Naive thymus-derived CD4-positive, alpha-beta T cell (primary cell): ENCODE measurements at regions of chr3 and their contacts with region 1.

Region 1: DNA sequence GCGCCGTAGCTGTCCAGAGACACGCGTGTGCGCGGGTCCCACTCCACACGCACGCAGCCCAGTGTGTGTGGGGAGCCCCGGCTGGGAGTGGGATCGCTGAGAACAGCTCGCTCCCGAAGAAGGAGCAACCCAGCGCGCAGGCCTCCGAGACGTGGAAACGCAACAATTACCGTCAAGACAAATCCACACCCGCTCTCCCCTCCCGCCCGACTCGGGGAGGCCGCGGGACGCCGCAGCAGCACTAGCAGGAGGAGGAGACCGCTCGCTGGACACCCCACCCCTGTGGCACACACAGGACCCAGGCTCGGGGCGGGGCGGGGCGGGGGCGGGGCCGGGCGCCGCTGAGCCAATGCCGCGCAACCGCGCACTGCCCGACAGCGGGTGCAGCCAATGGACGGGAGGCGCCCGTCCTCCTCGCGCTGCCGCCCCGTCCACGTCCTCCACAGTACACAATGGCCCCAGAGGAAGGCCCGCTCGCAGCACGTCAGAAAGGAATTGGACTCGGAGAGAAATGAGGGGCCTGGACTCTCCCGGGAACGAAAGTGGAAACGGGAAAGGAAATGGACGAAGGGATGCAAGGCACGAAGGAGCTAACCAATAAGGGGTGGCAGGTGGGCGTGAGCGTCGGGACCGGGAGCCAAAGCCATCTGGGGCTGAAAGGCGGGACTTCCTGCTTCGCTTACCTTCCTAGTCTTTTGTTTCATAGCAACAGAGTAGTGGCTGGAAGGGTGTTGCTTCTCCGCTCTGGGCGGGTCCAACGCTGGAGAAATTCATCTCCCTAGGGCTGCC is at the start of gene CBLB:
- DNase-seq: peak; percentile 72 to 89 (median 85)
- ATAC-seq: peak; percentile 93
- H3K4me3 ChIP-seq: peak within 1 kb of the TSS; percentile 86
- H3K4me3 Mint-ChIP-seq: peak within 1 kb of the TSS; percentile 89 to 100 (median 97)
- H3K27ac ChIP-seq: peak within 1 kb of the TSS; percentile 91
- H3K27ac Mint-ChIP-seq: peak within 1 kb of the TSS; percentile 89 to 98 (median 94)
- H3K4me1 ChIP-seq: peaks cover 31 to 41% of the 10 kb centered on the region in 2 donors
- H3K4me1 Mint-ChIP-seq: peaks cover 23 to 58% (median 49%) of the 10 kb centered on the region in 7 donors
- H3K27me3 ChIP-seq: no peaks in the 10 kb centered on the region
- H3K27me3 Mint-ChIP-seq: no peaks in the 10 kb centered on the region
- total RNA-seq, gene CBLB: 82.8 to 135 (median 109) TPM

Region 2: DNA sequence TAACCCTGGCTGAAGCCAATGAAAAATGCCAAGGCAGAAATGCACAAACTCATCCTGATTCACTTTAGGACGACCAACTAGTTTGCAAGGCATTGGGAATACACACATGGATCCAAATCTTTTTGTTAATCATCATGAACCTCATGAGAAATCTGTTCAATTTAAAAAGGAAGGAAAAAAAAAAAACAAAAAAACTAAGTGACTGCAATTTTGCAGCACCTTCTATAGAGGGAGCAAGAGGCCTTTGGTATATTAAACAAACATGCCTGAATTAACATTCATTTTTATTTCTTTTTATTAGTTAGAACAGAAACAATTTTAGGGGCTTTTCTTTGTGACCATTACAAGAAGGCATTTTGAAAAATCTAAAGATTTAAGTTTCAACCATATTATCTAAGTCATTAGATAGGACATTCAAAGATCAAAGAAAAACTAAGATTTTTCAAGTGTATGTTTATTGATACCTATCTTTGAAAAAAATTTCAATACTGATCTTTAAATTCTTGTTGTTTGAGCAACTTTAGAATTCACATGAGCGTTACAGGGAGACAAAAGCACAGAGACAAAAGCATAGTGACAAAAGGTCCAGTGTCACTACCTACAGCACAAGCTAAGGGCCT is 182.5 kb before region 1 on chr3:
- CTCF ChIA-PET with region 1: no interaction called
- POLR2A ChIA-PET with region 1: no interaction called
- intact Hi-C with region 1: loop called (anchors 1 kb)
- DNase-seq: peak in 6 of 9 donors; percentile 17 to 57 (median 48)
- ATAC-seq: peak; percentile 76
- H3K4me3 ChIP-seq: no peak overlapping the region
- H3K4me3 Mint-ChIP-seq: no peak overlapping the region
- H3K27ac ChIP-seq: no peak overlapping the region
- H3K27ac Mint-ChIP-seq: peak overlapping the region in 8 of 9 donors; percentile 18 to 59 (median 48)
- H3K4me1 ChIP-seq: peaks cover 4 to 5% of the 10 kb centered on the region in 2 donors
- H3K4me1 Mint-ChIP-seq: peaks cover 14 to 37% (median 29%) of the 10 kb centered on the region in 7 donors
- H3K27me3 ChIP-seq: no peaks in the 10 kb centered on the region
- H3K27me3 Mint-ChIP-seq: no peaks in the 10 kb centered on the region

Region 3: GRCh38 chr3:105827959-105828358 is 41.0 kb before region 1 on chr3:
- CTCF ChIA-PET with region 1: no interaction called
- POLR2A ChIA-PET with region 1: no interaction called
- intact Hi-C with region 1: loop called (anchors 1 kb)
- DNase-seq: no peak
- ATAC-seq: no peak
- H3K4me3 ChIP-seq: no peak overlapping the region
- H3K4me3 Mint-ChIP-seq: peak overlapping the region in 4 of 10 donors; percentile 29 to 52 (median 40)
- H3K27ac ChIP-seq: no peak overlapping the region
- H3K27ac Mint-ChIP-seq: peak overlapping the region in 4 of 9 donors; percentile 1 to 90 (median 20)
- H3K4me1 ChIP-seq: peaks cover 37 to 65% of the 10 kb centered on the region in 2 donors
- H3K4me1 Mint-ChIP-seq: peaks cover 57 to 92% (median 88%) of the 10 kb centered on the region in 7 donors
- H3K27me3 ChIP-seq: no peaks in the 10 kb centered on the region
- H3K27me3 Mint-ChIP-seq: no peaks in the 10 kb centered on the region

Region 4: DNA sequence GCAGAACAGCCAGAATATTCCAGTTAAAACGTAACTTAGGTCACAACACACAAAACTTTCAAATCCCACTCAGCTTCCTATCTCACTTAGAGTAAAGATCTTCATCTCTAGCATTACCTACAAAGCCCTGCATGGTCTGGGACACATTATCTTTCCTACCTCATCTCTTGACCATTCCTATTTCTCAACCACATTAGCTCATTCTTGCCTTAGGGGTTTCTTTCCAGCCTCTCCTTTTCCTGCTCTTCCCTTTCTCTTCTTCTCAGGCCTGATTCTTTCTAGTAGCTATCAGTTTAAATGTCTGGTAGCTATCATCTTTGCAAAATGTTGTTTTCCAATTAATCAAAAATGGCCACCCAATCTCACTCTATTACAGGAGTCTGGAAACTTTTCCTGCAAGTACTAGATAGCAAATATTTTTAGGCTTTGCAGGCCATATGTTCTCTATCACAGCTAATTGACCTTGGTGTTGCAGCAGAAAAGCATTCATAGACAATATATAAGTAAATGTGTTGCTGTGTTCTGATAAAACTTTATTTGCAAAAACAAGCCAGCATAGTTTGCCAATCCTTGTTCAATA is 15.0 kb after region 1 on chr3:
- CTCF ChIA-PET with region 1: no interaction called
- POLR2A ChIA-PET with region 1: interaction called, 9 read pairs
- intact Hi-C with region 1: loop called (anchors 1 to 2 kb)
- DNase-seq: no peak
- ATAC-seq: no peak
- H3K4me3 ChIP-seq: no peak overlapping the region
- H3K4me3 Mint-ChIP-seq: peak overlapping the region; percentile 27 to 92 (median 86)
- H3K27ac ChIP-seq: no peak overlapping the region
- H3K27ac Mint-ChIP-seq: peak overlapping the region in 5 of 9 donors; percentile 0 to 49 (median 29)
- H3K4me1 ChIP-seq: no peaks in the 10 kb centered on the region
- H3K4me1 Mint-ChIP-seq: peaks cover 5 to 23% (median 12%) of the 10 kb centered on the region in 7 donors
- H3K27me3 ChIP-seq: no peaks in the 10 kb centered on the region
- H3K27me3 Mint-ChIP-seq: no peaks in the 10 kb centered on the region

Region 5: GRCh38 chr3:105906836-105907235 is 37.9 kb after region 1 on chr3:
- CTCF ChIA-PET with region 1: no interaction called
- POLR2A ChIA-PET with region 1: no interaction called
- intact Hi-C with region 1: no loop called
- DNase-seq: no peak
- ATAC-seq: no peak
- H3K4me3 ChIP-seq: no peak overlapping the region
- H3K4me3 Mint-ChIP-seq: no peak overlapping the region
- H3K27ac ChIP-seq: no peak overlapping the region
- H3K27ac Mint-ChIP-seq: no peak overlapping the region
- H3K4me1 ChIP-seq: peaks cover 0 to 5% of the 10 kb centered on the region in 2 donors
- H3K4me1 Mint-ChIP-seq: peaks cover 5 to 23% (median 13%) of the 10 kb centered on the region in 7 donors
- H3K27me3 ChIP-seq: no peaks in the 10 kb centered on the region
- H3K27me3 Mint-ChIP-seq: no peaks in the 10 kb centered on the region

Region 6: DNA sequence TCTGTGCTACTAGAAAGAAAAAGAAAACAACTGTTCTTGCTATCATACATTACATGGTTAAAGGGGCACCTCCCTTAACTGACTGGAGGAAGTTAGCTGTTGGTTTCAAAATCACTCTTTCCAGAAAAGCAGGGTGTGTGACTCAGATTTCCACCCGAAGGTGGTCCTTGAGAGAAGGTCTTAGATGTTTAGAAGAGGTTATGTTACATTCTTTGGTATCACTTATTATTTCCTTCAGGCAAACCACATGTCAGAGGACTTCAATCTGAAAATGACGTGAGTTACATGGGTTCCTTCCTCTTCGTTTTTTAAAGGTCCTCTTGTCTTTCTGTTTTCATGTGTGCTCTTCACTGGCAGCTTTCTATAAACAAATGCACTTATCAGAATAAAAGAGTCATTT is 307.8 kb after region 1 on chr3:
- CTCF ChIA-PET with region 1: no interaction called
- POLR2A ChIA-PET with region 1: no interaction called
- intact Hi-C with region 1: loop called (anchors 1 kb)
- DNase-seq: peak in 8 of 9 donors; percentile 59 to 86 (median 78)
- ATAC-seq: peak; percentile 94
- H3K4me3 ChIP-seq: peak overlapping the region; percentile 28
- H3K4me3 Mint-ChIP-seq: peak overlapping the region; percentile 1 to 79 (median 73)
- H3K27ac ChIP-seq: peak overlapping the region; percentile 43
- H3K27ac Mint-ChIP-seq: peak overlapping the region; percentile 50 to 91 (median 87)
- H3K4me1 ChIP-seq: peaks cover 28 to 32% of the 10 kb centered on the region in 2 donors
- H3K4me1 Mint-ChIP-seq: peaks cover 33 to 61% (median 56%) of the 10 kb centered on the region in 7 donors
- H3K27me3 ChIP-seq: no peaks in the 10 kb centered on the region
- H3K27me3 Mint-ChIP-seq: no peaks in the 10 kb centered on the region

Region 7: GRCh38 chr3:106333911-106334618 is 465.1 kb after region 1 on chr3:
- CTCF ChIA-PET with region 1: no interaction called
- POLR2A ChIA-PET with region 1: no interaction called
- intact Hi-C with region 1: loop called in 1 of 2 experiments (anchors 5 kb)
- DNase-seq: peak in 1 of 9 donors; percentile 45
- ATAC-seq: peak; percentile 47
- H3K4me3 ChIP-seq: no peak overlapping the region
- H3K4me3 Mint-ChIP-seq: peak overlapping the region in 1 of 10 donors; percentile 73
- H3K27ac ChIP-seq: no peak overlapping the region
- H3K27ac Mint-ChIP-seq: peak overlapping the region in 3 of 9 donors; percentile 47 to 86 (median 62)
- H3K4me1 ChIP-seq: peaks cover 0 to 47% of the 10 kb centered on the region in 2 donors
- H3K4me1 Mint-ChIP-seq: peaks cover 19 to 69% (median 38%) of the 10 kb centered on the region in 7 donors
- H3K27me3 ChIP-seq: no peaks in the 10 kb centered on the region
- H3K27me3 Mint-ChIP-seq: no peaks in the 10 kb centered on the region